Activated B cell treated with CpG ODN at 0.5 μM for 24 hours (primary cell): ENCODE measurements at regions of chr16 and their contacts with region 1.

Region 1: DNA sequence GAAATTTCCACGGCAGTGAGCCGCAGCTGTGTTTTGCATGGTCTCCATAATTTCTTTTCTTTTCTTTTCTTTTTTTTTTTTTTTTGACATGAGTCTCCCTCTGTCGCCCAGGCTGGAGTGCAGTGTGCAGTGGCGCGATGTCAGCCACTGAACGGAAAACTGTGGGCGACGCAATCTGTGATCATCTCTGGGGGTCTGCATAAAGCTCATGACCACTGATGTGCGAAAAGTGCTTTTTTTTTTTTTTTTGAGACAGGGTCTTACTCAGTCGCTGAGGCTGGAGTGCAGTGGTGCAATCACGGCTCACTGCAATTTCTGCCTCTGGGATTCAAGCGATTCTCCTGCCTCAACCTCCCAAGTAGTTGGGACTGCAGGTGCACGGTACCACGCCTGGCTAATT is 117.6 kb downstream of the ABCC6 start:
- DNase-seq: no peak
- ATAC-seq: peak; percentile 49
- H3K4me3 Mint-ChIP-seq: peak overlapping the region; percentile 28
- H3K27ac Mint-ChIP-seq: peak overlapping the region; percentile 24
- H3K4me1 Mint-ChIP-seq: peaks cover 35% of the 10 kb centered on the region
- H3K27me3 Mint-ChIP-seq: no peaks in the 10 kb centered on the region
- CTCF ChIP-seq: no peak

Region 2: DNA sequence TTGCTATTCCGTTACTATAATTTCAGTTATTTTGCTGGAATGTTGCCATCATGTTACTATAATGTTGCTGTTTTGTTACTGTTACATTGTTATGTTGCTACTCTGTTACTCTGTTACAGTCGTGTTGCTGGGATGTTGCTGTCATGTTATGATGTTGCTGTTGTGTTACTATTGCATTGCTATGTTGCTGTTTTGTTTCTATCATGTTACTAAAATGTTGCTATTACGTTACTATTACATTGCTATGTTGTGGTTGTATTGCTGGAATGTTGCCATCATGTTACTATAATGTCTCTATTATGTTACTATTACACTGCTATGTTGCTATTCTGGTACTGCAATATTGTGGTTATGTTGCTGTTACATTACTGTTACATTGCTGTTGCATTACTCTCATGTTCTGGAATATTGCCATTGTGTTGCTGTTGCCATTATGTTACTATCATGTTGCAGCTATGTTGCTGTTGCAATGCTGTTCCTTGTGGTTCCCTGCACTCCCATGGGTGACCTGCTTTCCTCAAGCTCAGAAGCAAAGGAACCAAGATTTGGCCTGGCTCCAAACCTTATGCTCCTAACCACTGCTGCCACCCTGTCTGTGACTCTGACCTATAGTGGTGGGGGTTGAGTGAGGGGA is 53.2 kb after region 1 on chr16:
- CTCF ChIA-PET with region 1: no interaction called
- POLR2A ChIA-PET with region 1: interaction called, 12 read pairs
- intact Hi-C with region 1: no loop called
- DNase-seq: no peak
- ATAC-seq: no peak
- H3K4me3 Mint-ChIP-seq: no peak overlapping the region
- H3K27ac Mint-ChIP-seq: no peak overlapping the region
- H3K4me1 Mint-ChIP-seq: no peaks in the 10 kb centered on the region
- H3K27me3 Mint-ChIP-seq: peaks cover 10% of the 10 kb centered on the region
- CTCF ChIP-seq: no peak